GM12878 (cell line): ENCODE measurements at regions of chr7 and their contacts with region 1.

Region 1: GRCh38 chr7:20199015-20199737 is 18.0 kb downstream of the MACC1 start:
- DNase-seq: peak; percentile 94
- ATAC-seq: peak; percentile 77
- H3K4me3 ChIP-seq: no peak overlapping the region; the same call in 1 of the 2 replicates
- H3K27ac ChIP-seq: peak overlapping the region; percentile 3; the same call in 1 of the 2 replicates
- H3K4me1 ChIP-seq: peaks cover 25% of the 10 kb centered on the region
- H3K27me3 ChIP-seq: no peaks in the 10 kb centered on the region
- CTCF ChIP-seq: no peak
- EP300 ChIP-seq: peak in 1 of 2 experiments; percentile 32; a peak in 1 of 4 replicates
- POLR2A ChIP-seq: no peak
- RAD21 ChIP-seq: no peak

Region 2: GRCh38 chr7:19852192-19852591 is 347.0 kb before region 1 on chr7:
- CTCF ChIA-PET with region 1: no interaction called
- POLR2A ChIA-PET with region 1: no interaction called
- RAD21 ChIA-PET with region 1: no interaction called
- SMC1A ChIA-PET with region 1: no interaction called
- in situ Hi-C with region 1: no loop called
- intact Hi-C with region 1: no loop called
- DNase-seq: no peak
- ATAC-seq: no peak
- H3K4me3 ChIP-seq: no peak overlapping the region
- H3K27ac ChIP-seq: no peak overlapping the region
- H3K4me1 ChIP-seq: no peaks in the 10 kb centered on the region
- H3K27me3 ChIP-seq: no peaks in the 10 kb centered on the region
- CTCF ChIP-seq: no peak
- EP300 ChIP-seq: no peak
- POLR2A ChIP-seq: no peak
- RAD21 ChIP-seq: no peak

Region 3: DNA sequence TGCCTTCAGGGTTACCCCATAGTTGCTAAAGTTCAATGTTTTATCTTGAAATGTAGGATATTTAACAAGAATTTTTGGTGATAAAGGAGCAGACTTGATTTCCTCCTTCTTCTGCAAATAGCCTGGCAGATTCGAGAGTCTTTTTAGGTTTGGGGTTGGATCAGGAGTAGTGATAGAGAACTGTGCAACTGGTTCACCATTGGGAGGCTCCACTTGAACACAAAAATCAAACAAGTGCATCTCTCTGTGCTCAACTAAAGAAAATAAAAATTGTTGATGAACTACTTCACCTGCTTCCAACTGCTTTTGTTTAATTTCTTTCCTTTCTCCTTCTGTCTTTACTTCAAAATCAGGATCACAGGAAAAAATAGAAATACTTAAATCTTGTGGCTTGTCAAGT is 40.5 kb before region 1 on chr7:
- CTCF ChIA-PET with region 1: interaction called, 16 read pairs
- POLR2A ChIA-PET with region 1: interaction called, 4 read pairs
- RAD21 ChIA-PET with region 1: interaction called, 9 read pairs
- SMC1A ChIA-PET with region 1: interaction called, 11 read pairs
- in situ Hi-C with region 1: no loop called
- intact Hi-C with region 1: no loop called
- DNase-seq: no peak
- ATAC-seq: peak; percentile 77
- H3K4me3 ChIP-seq: no peak overlapping the region
- H3K27ac ChIP-seq: no peak overlapping the region
- H3K4me1 ChIP-seq: no peaks in the 10 kb centered on the region
- H3K27me3 ChIP-seq: no peaks in the 10 kb centered on the region
- CTCF ChIP-seq: peak; percentile 43 to 54 (median 48); a peak in 5 of 6 replicates
- EP300 ChIP-seq: no peak
- POLR2A ChIP-seq: no peak
- RAD21 ChIP-seq: peak; percentile 73

Region 4: GRCh38 chr7:20212231-20212630 is 13.1 kb after region 1 on chr7:
- CTCF ChIA-PET with region 1: interaction called, 21 read pairs
- POLR2A ChIA-PET with region 1: interaction called, 49 read pairs
- RAD21 ChIA-PET with region 1: interaction called, 44 read pairs
- SMC1A ChIA-PET with region 1: interaction called, 123 read pairs
- in situ Hi-C with region 1: no loop called
- intact Hi-C with region 1: loop called (anchors 1 kb)
- DNase-seq: no peak
- ATAC-seq: no peak
- H3K4me3 ChIP-seq: no peak overlapping the region
- H3K27ac ChIP-seq: no peak overlapping the region
- H3K4me1 ChIP-seq: no peaks in the 10 kb centered on the region
- H3K27me3 ChIP-seq: no peaks in the 10 kb centered on the region
- CTCF ChIP-seq: no peak
- EP300 ChIP-seq: no peak
- POLR2A ChIP-seq: no peak
- RAD21 ChIP-seq: no peak

Region 5: GRCh38 chr7:20229646-20230500 is 30.7 kb after region 1 on chr7:
- CTCF ChIA-PET with region 1: interaction called, 4 read pairs
- POLR2A ChIA-PET with region 1: interaction called, 3 read pairs
- RAD21 ChIA-PET with region 1: interaction called, 12 read pairs
- SMC1A ChIA-PET with region 1: interaction called, 54 read pairs
- in situ Hi-C with region 1: no loop called
- intact Hi-C with region 1: no loop called
- DNase-seq: no peak
- ATAC-seq: no peak
- H3K4me3 ChIP-seq: no peak overlapping the region
- H3K27ac ChIP-seq: no peak overlapping the region
- H3K4me1 ChIP-seq: peaks cover 9% of the 10 kb centered on the region
- H3K27me3 ChIP-seq: no peaks in the 10 kb centered on the region
- CTCF ChIP-seq: no peak
- EP300 ChIP-seq: no peak
- POLR2A ChIP-seq: no peak
- RAD21 ChIP-seq: no peak

Region 6: DNA sequence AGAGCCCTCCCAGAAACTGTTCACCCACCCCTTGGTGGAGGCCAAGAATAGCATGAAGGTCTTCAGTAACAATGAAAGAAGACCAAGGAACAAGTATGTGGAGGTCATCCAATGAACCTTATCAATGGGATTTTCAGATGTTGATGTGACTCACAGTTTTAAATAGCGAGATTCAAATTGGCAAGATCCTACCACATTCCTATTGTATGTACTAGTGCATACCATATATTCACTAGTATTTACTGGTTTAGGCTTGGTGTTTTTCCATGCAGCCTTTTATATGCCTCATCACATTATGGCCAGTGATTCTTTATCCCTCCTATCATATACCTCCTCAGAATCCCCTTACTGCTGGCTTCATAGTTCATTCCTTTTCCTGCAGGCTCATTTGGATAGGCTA is 185.9 kb after region 1 on chr7:
- CTCF ChIA-PET with region 1: no interaction called
- POLR2A ChIA-PET with region 1: no interaction called
- RAD21 ChIA-PET with region 1: no interaction called
- SMC1A ChIA-PET with region 1: no interaction called
- in situ Hi-C with region 1: no loop called
- intact Hi-C with region 1: no loop called
- DNase-seq: no peak
- ATAC-seq: no peak
- H3K4me3 ChIP-seq: no peak overlapping the region
- H3K27ac ChIP-seq: no peak overlapping the region
- H3K4me1 ChIP-seq: no peaks in the 10 kb centered on the region
- H3K27me3 ChIP-seq: no peaks in the 10 kb centered on the region
- CTCF ChIP-seq: no peak
- EP300 ChIP-seq: no peak
- POLR2A ChIP-seq: no peak
- RAD21 ChIP-seq: no peak

Region 7: GRCh38 chr7:20708896-20709295 is 509.7 kb after region 1 on chr7:
- CTCF ChIA-PET with region 1: no interaction called
- POLR2A ChIA-PET with region 1: no interaction called
- RAD21 ChIA-PET with region 1: no interaction called
- SMC1A ChIA-PET with region 1: no interaction called
- in situ Hi-C with region 1: no loop called
- intact Hi-C with region 1: no loop called
- DNase-seq: no peak
- ATAC-seq: no peak
- H3K4me3 ChIP-seq: no peak overlapping the region
- H3K27ac ChIP-seq: no peak overlapping the region
- H3K4me1 ChIP-seq: no peaks in the 10 kb centered on the region
- H3K27me3 ChIP-seq: no peaks in the 10 kb centered on the region
- CTCF ChIP-seq: no peak
- EP300 ChIP-seq: no peak
- POLR2A ChIP-seq: no peak
- RAD21 ChIP-seq: no peak